MCF 10A (cell line): ENCODE measurements at regions of chr3 and their contacts with region 1.

Region 1: DNA sequence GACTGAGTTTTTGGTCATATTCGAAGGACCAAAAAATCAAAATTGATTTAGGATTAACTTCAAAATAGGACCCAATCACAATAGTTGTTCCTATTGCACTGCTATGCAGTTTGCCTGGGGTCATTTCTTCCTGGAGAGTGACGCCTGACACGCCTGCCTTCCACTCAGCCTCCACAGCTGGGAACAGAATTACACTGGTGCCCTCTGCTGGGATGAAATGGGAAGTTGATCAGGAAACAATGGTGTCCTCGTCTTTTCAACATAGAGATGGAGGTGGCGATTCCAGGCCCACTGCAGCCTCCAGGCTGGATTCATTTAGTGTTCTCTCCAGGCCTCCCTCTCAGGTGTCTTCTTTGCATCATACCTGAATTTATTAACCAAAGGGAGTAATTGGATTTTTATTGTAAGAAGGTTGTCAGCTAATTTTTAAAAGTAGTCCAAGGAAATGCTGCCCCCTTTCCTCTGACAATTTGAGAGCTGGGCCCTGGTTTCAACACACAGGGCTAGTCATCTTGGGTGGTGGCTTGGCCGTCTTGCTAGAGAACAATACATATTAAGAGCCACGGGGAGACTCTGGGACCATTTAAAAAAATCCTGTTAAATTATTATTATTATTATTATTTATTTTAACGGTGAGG is 69.7 kb downstream of the GAP43 start:
- DNase-seq: peak; percentile 88
- H3K4me3 Mint-ChIP-seq: no peak overlapping the region
- H3K27ac Mint-ChIP-seq: no peak overlapping the region
- H3K4me1 Mint-ChIP-seq: peaks cover 21% of the 10 kb centered on the region
- H3K27me3 Mint-ChIP-seq: no peaks in the 10 kb centered on the region
- CTCF ChIP-seq: peak; percentile 83

Region 2: GRCh38 chr3:114827495-114827894 is 865.5 kb before region 1 on chr3:
- CTCF ChIA-PET with region 1: interaction called, 4 read pairs
- POLR2A ChIA-PET with region 1: no interaction called
- intact Hi-C with region 1: loop called (anchors 1 kb)
- DNase-seq: peak; percentile 50
- H3K4me3 Mint-ChIP-seq: no peak overlapping the region
- H3K27ac Mint-ChIP-seq: no peak overlapping the region
- H3K4me1 Mint-ChIP-seq: no peaks in the 10 kb centered on the region
- H3K27me3 Mint-ChIP-seq: no peaks in the 10 kb centered on the region
- CTCF ChIP-seq: peak; percentile 64

Region 3: DNA sequence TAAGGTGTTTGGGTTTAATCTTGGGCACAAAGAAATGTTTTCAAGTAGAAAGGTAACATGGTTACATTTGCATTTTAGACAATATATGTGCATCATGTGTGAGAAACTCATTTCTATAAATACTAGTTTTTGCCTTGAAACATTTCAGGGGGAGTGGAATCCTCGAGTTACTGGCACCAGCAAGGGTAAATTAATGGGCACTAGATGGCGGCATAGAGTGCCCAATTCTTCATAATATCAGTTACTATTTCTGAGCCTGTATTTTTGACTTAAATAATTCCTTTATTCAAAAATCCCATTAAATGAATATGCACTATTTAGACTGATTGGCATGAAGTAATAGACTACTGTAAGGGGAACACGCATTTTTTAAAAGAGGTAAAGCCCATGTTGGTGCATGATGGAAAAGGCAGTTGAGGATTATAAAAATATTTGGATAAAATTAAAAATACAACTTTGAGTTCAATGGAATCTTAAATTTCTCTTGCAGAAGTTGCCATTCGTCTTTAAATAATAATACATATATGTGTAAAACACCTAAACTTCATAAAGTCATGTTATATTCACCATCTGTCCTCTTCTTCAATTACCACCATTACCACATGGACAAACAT is 652.2 kb before region 1 on chr3:
- CTCF ChIA-PET with region 1: interaction called, 7 read pairs
- POLR2A ChIA-PET with region 1: no interaction called
- intact Hi-C with region 1: loop called (anchors 1 kb)
- DNase-seq: peak; percentile 51
- H3K4me3 Mint-ChIP-seq: no peak overlapping the region
- H3K27ac Mint-ChIP-seq: no peak overlapping the region
- H3K4me1 Mint-ChIP-seq: no peaks in the 10 kb centered on the region
- H3K27me3 Mint-ChIP-seq: no peaks in the 10 kb centered on the region
- CTCF ChIP-seq: peak; percentile 51

Region 4: GRCh38 chr3:115217678-115218451 is 475.1 kb before region 1 on chr3:
- CTCF ChIA-PET with region 1: interaction called, 33 read pairs
- POLR2A ChIA-PET with region 1: interaction called, 3 read pairs
- intact Hi-C with region 1: loop called (anchors 1 kb)
- DNase-seq: peak; percentile 71
- H3K4me3 Mint-ChIP-seq: no peak overlapping the region
- H3K27ac Mint-ChIP-seq: peak overlapping the region; percentile 9
- H3K4me1 Mint-ChIP-seq: peaks cover 8% of the 10 kb centered on the region
- H3K27me3 Mint-ChIP-seq: no peaks in the 10 kb centered on the region
- CTCF ChIP-seq: peak; percentile 81

Region 5: GRCh38 chr3:115704661-115705338 is 11.8 kb after region 1 on chr3:
- CTCF ChIA-PET with region 1: interaction called, 10 read pairs
- POLR2A ChIA-PET with region 1: no interaction called
- intact Hi-C with region 1: no loop called
- DNase-seq: no peak
- H3K4me3 Mint-ChIP-seq: no peak overlapping the region
- H3K27ac Mint-ChIP-seq: no peak overlapping the region
- H3K4me1 Mint-ChIP-seq: no peaks in the 10 kb centered on the region
- H3K27me3 Mint-ChIP-seq: no peaks in the 10 kb centered on the region
- CTCF ChIP-seq: no peak

Region 6: DNA sequence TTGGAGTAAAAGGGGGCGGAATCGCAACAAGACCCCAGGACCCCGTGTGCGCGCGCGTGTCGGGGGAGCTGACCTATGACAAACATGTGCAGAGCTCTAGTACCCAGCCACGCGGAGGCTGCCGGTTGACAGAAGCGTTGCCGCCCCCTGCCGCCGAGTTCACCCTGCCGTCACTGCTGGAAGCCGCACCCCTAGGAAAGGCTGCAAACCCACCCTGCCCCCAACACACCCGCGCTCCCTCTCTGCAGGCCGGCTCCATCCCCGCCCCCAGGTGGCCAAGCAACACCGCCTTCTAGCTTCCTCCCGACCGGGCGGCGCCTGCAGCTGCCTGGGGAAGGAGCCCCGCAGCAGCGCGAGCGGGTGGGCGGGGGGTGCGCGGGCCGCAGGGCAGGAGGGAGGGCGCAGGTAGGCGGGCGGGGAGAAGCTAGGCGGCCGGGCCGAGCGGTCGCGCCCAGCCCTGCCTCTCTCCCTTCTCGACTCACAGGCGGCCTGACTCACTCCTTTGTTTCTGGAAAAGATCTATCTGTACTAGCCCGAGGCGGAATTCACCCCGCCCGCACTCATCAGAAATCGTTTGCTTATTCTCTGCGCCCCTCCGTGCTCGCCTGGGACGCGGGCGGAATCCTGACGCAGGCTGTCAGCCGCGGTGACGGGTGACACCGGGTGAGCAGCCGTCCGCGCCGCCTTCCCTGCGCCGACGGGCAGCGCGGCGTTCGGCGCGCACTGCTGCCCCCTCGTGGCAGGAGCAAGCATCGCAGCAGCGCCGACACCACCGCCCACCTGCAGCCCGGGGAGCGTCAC is 91.1 kb after region 1 on chr3:
- CTCF ChIA-PET with region 1: interaction called, 15 read pairs
- POLR2A ChIA-PET with region 1: interaction called, 3 read pairs
- intact Hi-C with region 1: loop called (anchors 1 kb)
- DNase-seq: peak; percentile 86
- H3K4me3 Mint-ChIP-seq: peak overlapping the region; percentile 81
- H3K27ac Mint-ChIP-seq: peak overlapping the region; percentile 90
- H3K4me1 Mint-ChIP-seq: peaks cover 25% of the 10 kb centered on the region
- H3K27me3 Mint-ChIP-seq: no peaks in the 10 kb centered on the region
- CTCF ChIP-seq: peak; percentile 94

Region 7: DNA sequence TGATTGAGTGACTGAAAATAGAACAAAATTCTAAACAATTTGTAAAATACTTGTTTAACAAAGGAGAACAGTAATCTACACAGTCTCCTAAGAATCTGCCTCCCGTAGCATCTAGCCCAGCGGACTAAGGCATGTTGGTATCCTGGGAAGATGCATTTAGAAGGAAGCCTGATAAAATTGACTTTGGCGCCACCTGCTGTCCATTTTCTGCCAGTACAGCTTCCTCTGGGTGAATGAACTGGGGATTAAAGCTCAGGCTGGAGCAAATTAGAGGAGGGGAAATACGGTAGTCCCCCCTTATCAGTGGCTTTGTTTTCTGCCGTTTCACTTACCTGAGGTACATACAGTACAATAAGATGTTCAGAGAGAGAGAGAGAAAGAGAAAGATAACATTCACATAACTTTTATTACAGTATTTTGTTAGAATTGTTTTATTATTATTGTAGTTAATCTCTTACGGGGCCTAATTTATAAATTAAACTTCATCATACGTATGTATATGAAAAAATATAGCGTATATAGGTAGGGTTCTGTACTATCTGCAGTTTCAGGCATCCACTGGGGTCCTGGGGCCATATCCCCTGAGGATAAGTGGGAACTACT is 121.9 kb after region 1 on chr3:
- CTCF ChIA-PET with region 1: interaction called, 5 read pairs
- POLR2A ChIA-PET with region 1: interaction called, 3 read pairs
- intact Hi-C with region 1: loop called (anchors 1 kb)
- DNase-seq: peak; percentile 85
- H3K4me3 Mint-ChIP-seq: no peak overlapping the region
- H3K27ac Mint-ChIP-seq: no peak overlapping the region
- H3K4me1 Mint-ChIP-seq: no peaks in the 10 kb centered on the region
- H3K27me3 Mint-ChIP-seq: no peaks in the 10 kb centered on the region
- CTCF ChIP-seq: peak; percentile 81

Region 8: DNA sequence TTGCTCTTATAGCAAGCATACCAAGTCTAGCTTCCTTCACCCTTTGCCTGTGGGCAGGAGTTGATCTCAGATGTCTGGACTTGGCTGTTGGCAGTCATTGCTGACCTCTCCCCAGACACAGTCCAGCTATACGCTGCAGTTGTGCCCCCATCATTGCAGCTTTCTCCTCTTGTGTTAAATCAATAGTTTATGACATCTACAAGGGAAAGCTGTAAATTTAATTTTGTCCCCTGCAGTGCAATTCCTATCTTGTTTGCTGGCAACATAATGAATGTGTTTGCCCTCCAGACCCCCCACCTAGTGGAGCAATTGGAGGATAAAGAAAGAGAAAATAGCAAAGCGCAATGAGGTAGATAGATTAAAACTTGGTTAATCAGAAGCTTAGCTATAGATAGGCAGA is 472.1 kb after region 1 on chr3:
- CTCF ChIA-PET with region 1: no interaction called
- POLR2A ChIA-PET with region 1: no interaction called
- intact Hi-C with region 1: no loop called
- DNase-seq: no peak
- H3K4me3 Mint-ChIP-seq: no peak overlapping the region
- H3K27ac Mint-ChIP-seq: no peak overlapping the region
- H3K4me1 Mint-ChIP-seq: no peaks in the 10 kb centered on the region
- H3K27me3 Mint-ChIP-seq: peaks cover 13% of the 10 kb centered on the region
- CTCF ChIP-seq: no peak